ENCODE measurements at regions of chr5 and their contacts with region 1.

Region 1: GRCh38 chr5:141650851-141651727 is at the start of gene FCHSD1:
- DNase-seq: peak; percentile 62 to 88 (median 76)
- ATAC-seq: peak; percentile 91
- H3K4me3 ChIP-seq: peak within 1 kb of the TSS; percentile 86
- H3K4me3 Mint-ChIP-seq: peak within 1 kb of the TSS; percentile 86
- H3K27ac ChIP-seq: peak within 1 kb of the TSS; percentile 26 to 83
- H3K27ac Mint-ChIP-seq: peak within 1 kb of the TSS; percentile 54
- H3K4me1 ChIP-seq: peaks cover 28% of the 10 kb centered on the region
- H3K4me1 Mint-ChIP-seq: peaks cover 38% of the 10 kb centered on the region
- H3K27me3 ChIP-seq: no peaks in the 10 kb centered on the region
- H3K27me3 Mint-ChIP-seq: peaks cover 3% of the 10 kb centered on the region
- CTCF ChIP-seq: no peak
- total RNA-seq, gene FCHSD1: 79.8 to 86.8 TPM

Region 2: DNA sequence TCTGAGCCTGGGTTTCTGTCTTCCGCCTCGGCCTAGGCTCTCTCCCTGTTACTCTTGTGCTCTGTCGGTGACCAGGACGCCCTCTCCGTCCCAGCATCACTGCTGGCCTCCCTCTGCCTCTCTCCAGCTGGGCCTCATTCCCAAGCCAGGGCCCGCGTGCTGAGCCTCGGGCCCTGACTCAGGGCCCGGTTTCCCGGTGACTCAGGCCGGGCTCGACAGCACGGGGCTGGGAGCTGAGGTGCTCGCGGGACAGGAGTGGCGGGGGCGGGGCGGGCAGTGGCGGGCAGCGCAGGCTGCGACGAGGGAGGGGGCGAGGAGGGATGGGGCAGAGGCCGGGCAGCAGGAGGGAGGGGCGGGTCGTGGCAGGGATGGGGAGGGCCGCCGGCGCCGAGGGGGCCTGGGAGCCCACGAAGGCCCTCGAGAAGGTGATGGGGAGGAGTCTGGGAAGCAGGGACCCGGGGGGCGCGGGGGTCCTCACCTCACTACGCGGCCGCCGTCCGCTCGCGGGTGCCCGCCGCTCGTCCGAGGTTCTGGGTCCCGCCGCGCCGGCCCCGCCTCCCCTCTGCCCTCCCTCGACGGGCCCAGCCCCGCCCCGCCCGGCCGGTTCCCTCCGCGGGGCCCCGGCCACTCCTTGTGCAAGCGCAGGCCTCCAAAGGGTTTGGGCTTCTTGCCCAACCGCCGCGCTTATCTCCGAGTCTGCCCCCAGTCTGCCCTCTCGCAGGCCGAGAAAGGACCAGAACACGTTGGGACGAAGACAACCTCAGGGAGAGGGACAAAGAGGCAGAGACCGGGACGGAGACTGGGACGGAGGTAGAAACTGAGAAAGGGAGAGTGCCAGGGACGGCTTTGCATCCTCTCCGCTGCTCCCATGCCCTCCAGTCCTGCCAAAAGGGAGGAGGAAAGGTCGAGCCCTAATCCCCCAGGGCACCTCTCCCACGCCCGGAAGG is 30.9 kb after region 1 on chr5 and contains the start of gene ARAP3:
- CTCF ChIA-PET with region 1: no interaction called
- POLR2A ChIA-PET with region 1: interaction called, 14 read pairs
- intact Hi-C with region 1: no loop called
- DNase-seq: peak in 10 of 14 experiments; percentile 22 to 66 (median 38)
- ATAC-seq: peak; percentile 66
- H3K4me3 ChIP-seq: peak within 1 kb of the TSS; percentile 51
- H3K4me3 Mint-ChIP-seq: peak within 1 kb of the TSS; percentile 62
- H3K27ac ChIP-seq: no peak within 1 kb of the TSS
- H3K27ac Mint-ChIP-seq: no peak within 1 kb of the TSS
- H3K4me1 ChIP-seq: peaks cover 37% of the 10 kb centered on the region
- H3K4me1 Mint-ChIP-seq: peaks cover 29% of the 10 kb centered on the region
- H3K27me3 ChIP-seq: no peaks in the 10 kb centered on the region
- H3K27me3 Mint-ChIP-seq: no peaks in the 10 kb centered on the region
- CTCF ChIP-seq: no peak
- total RNA-seq, gene ARAP3: 0.30 to 0.31 TPM

Region 3: GRCh38 chr5:141709699-141710267 is 58.7 kb after region 1 on chr5:
- CTCF ChIA-PET with region 1: no interaction called
- POLR2A ChIA-PET with region 1: no interaction called
- intact Hi-C with region 1: no loop called
- DNase-seq: no peak
- ATAC-seq: no peak
- H3K4me3 ChIP-seq: no peak overlapping the region
- H3K4me3 Mint-ChIP-seq: no peak overlapping the region
- H3K27ac ChIP-seq: no peak overlapping the region
- H3K27ac Mint-ChIP-seq: no peak overlapping the region
- H3K4me1 ChIP-seq: no peaks in the 10 kb centered on the region
- H3K4me1 Mint-ChIP-seq: no peaks in the 10 kb centered on the region
- H3K27me3 ChIP-seq: peaks cover 0 to 10% of the 10 kb centered on the region in 2 experiments
- H3K27me3 Mint-ChIP-seq: no peaks in the 10 kb centered on the region
- CTCF ChIP-seq: no peak

Region 4: GRCh38 chr5:141923448-141924352 is 272.6 kb after region 1 on chr5 and contains the start of gene DELE1:
- CTCF ChIA-PET with region 1: no interaction called
- POLR2A ChIA-PET with region 1: interaction called, 20 read pairs
- intact Hi-C with region 1: no loop called
- DNase-seq: peak; percentile 82 to 95 (median 87)
- ATAC-seq: peak; percentile 94
- H3K4me3 ChIP-seq: peak within 1 kb of the TSS; percentile 75
- H3K4me3 Mint-ChIP-seq: peak within 1 kb of the TSS; percentile 96
- H3K27ac ChIP-seq: peak within 1 kb of the TSS; percentile 94 to 96
- H3K27ac Mint-ChIP-seq: peak within 1 kb of the TSS; percentile 99
- H3K4me1 ChIP-seq: peaks cover 30% of the 10 kb centered on the region
- H3K4me1 Mint-ChIP-seq: peaks cover 45% of the 10 kb centered on the region
- H3K27me3 ChIP-seq: no peaks in the 10 kb centered on the region
- H3K27me3 Mint-ChIP-seq: no peaks in the 10 kb centered on the region
- CTCF ChIP-seq: no peak
- total RNA-seq, gene DELE1: 60.0 to 61.1 TPM

Region 5: GRCh38 chr5:142685418-142686209 is 1034.5 kb after region 1 on chr5 and contains the start of gene FGF1:
- CTCF ChIA-PET with region 1: no interaction called
- POLR2A ChIA-PET with region 1: no interaction called
- intact Hi-C with region 1: no loop called
- DNase-seq: no peak
- ATAC-seq: no peak
- H3K4me3 ChIP-seq: no peak within 1 kb of the TSS
- H3K4me3 Mint-ChIP-seq: no peak within 1 kb of the TSS
- H3K27ac ChIP-seq: no peak within 1 kb of the TSS
- H3K27ac Mint-ChIP-seq: no peak within 1 kb of the TSS
- H3K4me1 ChIP-seq: no peaks in the 10 kb centered on the region
- H3K4me1 Mint-ChIP-seq: no peaks in the 10 kb centered on the region
- H3K27me3 ChIP-seq: peaks cover 0 to 2% of the 10 kb centered on the region in 2 experiments
- H3K27me3 Mint-ChIP-seq: peaks cover 4% of the 10 kb centered on the region
- CTCF ChIP-seq: no peak
- total RNA-seq, gene FGF1: not detected